ENCODE measurements at regions of chr3 and their contacts with region 1.

Region 1: DNA sequence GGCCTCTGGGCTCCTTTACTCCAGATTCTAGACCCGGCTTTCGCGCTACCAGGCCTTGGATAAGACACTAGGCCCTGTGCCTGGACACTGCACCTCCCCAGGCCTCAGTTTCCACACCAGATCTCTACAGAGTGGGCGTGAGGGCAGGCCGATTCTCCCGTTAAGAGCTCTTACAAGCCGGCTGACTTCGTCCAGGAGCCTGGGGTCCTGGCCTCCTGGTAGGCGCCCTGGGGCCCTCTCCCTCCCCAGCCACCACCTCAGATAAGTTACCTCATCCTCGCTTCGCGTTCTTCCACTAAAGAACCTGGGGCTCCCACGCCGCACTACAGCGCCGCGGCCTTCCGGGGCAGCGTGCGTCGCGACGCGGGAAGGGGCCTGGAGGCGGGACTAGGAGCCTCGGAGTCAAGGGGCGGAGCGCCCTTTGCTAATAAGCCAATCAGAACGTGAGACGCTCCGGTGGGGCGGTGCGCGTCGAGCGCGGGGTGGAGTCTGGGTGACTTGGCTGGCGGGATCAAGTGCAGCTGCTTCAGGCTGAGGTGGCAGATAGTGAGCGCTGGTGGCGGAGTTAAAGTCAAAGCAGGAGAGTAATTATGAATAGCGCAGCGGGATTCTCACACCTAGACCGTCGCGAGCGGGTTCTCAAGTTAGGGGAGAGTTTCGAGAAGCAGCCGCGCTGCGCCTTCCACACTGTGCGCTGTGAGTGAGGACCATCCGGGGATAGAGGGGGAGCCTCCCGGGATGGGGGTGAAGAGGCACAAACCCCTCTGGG is at the starts of genes EAF2 and IQCB1:
- DNase-seq: peak; percentile 98
- ATAC-seq: peak; percentile 98
- H3K4me3 Mint-ChIP-seq: peak within 1 kb of the TSS; percentile 98
- H3K27ac Mint-ChIP-seq: peak within 1 kb of the TSS; percentile 94
- H3K4me1 Mint-ChIP-seq: peaks cover 38% of the 10 kb centered on the region
- H3K27me3 Mint-ChIP-seq: no peaks in the 10 kb centered on the region
- total RNA-seq, gene EAF2: 12.4 to 12.9 TPM
- total RNA-seq, gene IQCB1: 41.3 to 42.8 TPM

Region 2: DNA sequence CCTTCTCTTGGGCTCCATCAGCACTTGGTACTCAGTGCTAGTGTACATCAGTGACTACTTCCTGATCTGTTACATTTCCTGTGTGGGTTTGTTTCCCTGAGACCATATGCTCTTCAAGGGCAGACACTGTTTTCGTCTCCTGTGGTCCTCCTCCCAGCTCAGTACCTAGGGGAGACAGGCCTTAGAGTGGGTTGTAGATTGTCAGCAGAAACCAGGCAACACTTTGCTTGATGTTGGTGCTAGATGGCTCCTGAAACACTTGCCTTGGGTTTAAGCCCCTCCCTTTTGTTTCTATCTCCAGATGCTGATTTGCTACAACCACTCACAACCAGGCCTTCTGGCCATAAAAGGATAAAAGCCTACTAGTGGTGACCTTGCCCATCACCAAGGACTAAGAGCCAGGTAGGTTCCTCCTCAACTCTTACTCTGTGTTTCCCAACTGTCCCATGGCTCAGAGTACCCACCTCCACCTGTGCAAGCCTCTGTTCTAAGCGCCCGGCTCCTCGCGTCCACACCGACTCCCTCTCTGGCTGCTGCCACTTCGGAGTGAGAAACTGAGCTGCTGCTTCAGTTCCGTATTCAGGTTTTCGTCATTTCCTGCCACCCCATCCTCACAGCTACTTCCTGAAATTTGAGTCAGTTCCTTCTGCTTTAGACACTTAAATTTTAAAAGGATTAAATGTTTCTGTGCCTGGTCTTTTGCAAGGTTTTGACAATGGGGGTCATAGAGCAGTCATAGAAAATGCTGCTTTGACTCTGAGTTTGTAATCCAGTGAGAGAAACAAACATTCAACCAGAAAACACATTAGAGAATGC is 174.3 kb before region 1 on chr3 and contains the start of gene HCLS1:
- CTCF ChIA-PET with region 1: interaction called, 3 read pairs
- POLR2A ChIA-PET with region 1: no interaction called
- intact Hi-C with region 1: loop called (anchors 1 to 10 kb)
- DNase-seq: peak; percentile 83
- ATAC-seq: peak; percentile 88
- H3K4me3 Mint-ChIP-seq: peak within 1 kb of the TSS; percentile 95
- H3K27ac Mint-ChIP-seq: peak within 1 kb of the TSS; percentile 97
- H3K4me1 Mint-ChIP-seq: peaks cover 50% of the 10 kb centered on the region
- H3K27me3 Mint-ChIP-seq: no peaks in the 10 kb centered on the region
- total RNA-seq, gene HCLS1: 200 to 235 TPM

Region 3: GRCh38 chr3:121957674-121958415 is 123.0 kb after region 1 on chr3:
- CTCF ChIA-PET with region 1: no interaction called
- POLR2A ChIA-PET with region 1: no interaction called
- intact Hi-C with region 1: no loop called
- DNase-seq: no peak
- ATAC-seq: no peak
- H3K4me3 Mint-ChIP-seq: no peak overlapping the region
- H3K27ac Mint-ChIP-seq: no peak overlapping the region
- H3K4me1 Mint-ChIP-seq: no peaks in the 10 kb centered on the region
- H3K27me3 Mint-ChIP-seq: no peaks in the 10 kb centered on the region

Region 4: DNA sequence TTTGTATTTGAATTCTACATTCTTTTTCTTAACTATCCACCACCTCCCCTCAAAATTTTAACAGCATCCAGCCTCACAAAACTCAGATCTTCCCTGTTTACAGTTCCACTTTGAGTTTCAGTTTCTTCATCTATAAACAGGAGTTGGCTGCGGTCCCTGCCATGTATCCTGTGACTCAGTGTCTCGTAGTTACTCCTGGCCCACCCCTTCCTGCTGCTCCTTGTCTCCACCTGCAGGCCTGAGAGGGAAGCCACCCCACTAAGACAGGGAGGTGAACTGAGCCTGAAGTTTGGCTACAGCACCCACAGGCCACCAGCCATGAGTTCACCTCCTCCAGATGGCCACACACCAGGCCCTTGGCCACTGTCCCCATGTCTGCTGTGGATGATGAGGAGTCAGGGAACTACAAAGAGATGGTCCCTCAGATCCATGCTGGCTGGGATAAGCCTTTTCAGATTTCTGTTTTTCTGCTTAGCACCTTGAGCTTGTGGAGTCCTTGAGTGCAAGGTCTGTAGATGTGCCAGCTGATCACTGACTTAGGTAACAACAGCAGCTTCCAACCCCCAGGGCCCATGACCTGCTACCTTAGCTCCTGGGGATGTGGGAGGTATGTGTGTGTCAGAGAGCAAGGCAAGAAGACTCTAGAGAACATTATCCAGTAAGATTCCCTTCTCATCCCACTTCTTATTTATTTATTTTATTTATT is 257.7 kb after region 1 on chr3:
- CTCF ChIA-PET with region 1: no interaction called
- POLR2A ChIA-PET with region 1: no interaction called
- intact Hi-C with region 1: loop called in 1 of 2 experiments (anchors 2 kb)
- DNase-seq: peak; percentile 85
- ATAC-seq: peak; percentile 97
- H3K4me3 Mint-ChIP-seq: no peak overlapping the region
- H3K27ac Mint-ChIP-seq: peak overlapping the region; percentile 79
- H3K4me1 Mint-ChIP-seq: peaks cover 21% of the 10 kb centered on the region
- H3K27me3 Mint-ChIP-seq: no peaks in the 10 kb centered on the region

Region 5: GRCh38 chr3:122245513-122246174 is 410.8 kb after region 1 on chr3:
- CTCF ChIA-PET with region 1: no interaction called
- POLR2A ChIA-PET with region 1: no interaction called
- intact Hi-C with region 1: loop called in 1 of 2 experiments (anchors 5 kb)
- DNase-seq: no peak
- ATAC-seq: peak; percentile 85
- H3K4me3 Mint-ChIP-seq: peak overlapping the region; percentile 51
- H3K27ac Mint-ChIP-seq: peak overlapping the region; percentile 75
- H3K4me1 Mint-ChIP-seq: peaks cover 23% of the 10 kb centered on the region
- H3K27me3 Mint-ChIP-seq: peaks cover 11% of the 10 kb centered on the region

Region 6: DNA sequence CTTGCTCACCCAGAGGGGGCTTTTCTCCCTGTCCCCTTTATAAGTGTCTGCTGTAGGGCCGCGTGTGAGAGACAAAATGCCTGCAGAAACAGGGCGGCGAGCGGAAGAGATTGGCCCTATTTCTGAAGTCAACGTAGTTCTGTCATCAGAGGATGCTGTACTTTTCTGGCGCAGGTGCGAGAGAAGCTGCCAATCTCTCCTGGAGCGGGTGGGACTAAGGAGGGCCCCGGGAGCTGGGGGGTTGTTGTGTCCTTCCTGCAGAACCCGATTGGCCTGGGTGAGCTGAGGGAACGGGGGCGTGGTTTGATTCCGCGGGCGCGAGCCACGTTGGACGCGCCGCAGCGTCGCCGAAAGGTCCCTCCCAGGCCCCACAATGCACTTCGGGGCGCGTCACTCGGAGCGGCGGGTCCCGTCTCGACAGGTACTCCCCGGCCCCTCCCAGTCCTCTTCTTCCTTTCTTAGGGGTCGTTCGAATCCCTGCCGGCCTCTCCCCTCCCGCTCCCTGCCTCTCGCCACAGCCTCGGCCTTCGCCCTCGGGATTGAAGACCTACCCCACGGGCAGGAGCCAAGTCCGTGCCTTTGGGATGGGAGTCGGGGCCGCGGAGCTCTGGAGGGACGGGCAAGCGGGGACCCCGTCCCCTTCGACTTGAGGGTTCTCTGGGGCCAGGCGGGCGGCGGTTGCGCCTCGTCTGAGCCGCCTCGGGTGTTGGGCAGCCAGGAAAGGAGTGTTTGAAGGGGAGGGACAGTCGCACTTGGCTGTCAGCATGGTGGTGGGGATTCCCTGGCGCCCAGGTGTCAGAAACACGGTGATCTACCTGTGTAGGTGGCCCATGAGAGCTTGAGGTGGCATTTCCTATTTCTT is 1366.9 kb after region 1 on chr3 and contains the start of gene SEC22A:
- CTCF ChIA-PET with region 1: no interaction called
- POLR2A ChIA-PET with region 1: no interaction called
- intact Hi-C with region 1: loop called in 1 of 2 experiments (anchors 2 kb)
- DNase-seq: peak; percentile 98
- ATAC-seq: peak; percentile 99
- H3K4me3 Mint-ChIP-seq: peak within 1 kb of the TSS; percentile 96
- H3K27ac Mint-ChIP-seq: peak within 1 kb of the TSS; percentile 97
- H3K4me1 Mint-ChIP-seq: peaks cover 28% of the 10 kb centered on the region
- H3K27me3 Mint-ChIP-seq: no peaks in the 10 kb centered on the region
- total RNA-seq, gene SEC22A: 13.2 to 16.3 TPM

Measured in activated CD4-positive, alpha-beta T cell treated with anti-CD3 and anti-CD28 coated beads for 36 hours (primary cell).